Heart left ventricle (tissue), 16 donors: ENCODE measurements at regions of chr12 and their contacts with region 1.

Region 1: GRCh38 chr12:21697904-21698630 is 40.4 kb upstream of the LDHB start:
- DNase-seq: no peak
- ATAC-seq: peak in 2 of 4 donors; percentile 18 to 47
- H3K4me3 ChIP-seq: peak overlapping the region in 9 of 12 donors; percentile 9 to 41 (median 29)
- H3K27ac ChIP-seq: peak overlapping the region in 3 of 12 donors; percentile 6 to 28 (median 25)
- H3K4me1 ChIP-seq: peaks cover 0 to 4% (median 0%) of the 10 kb centered on the region in 12 donors
- H3K27me3 ChIP-seq: no peaks in the 10 kb centered on the region
- CTCF ChIP-seq: peak; percentile 64 to 86 (median 74)
- POLR2A ChIP-seq: no peak

Region 2: GRCh38 chr12:21989819-21990412 is 291.8 kb after region 1 on chr12:
- intact Hi-C with region 1: loop called in 8 of 10 experiments (anchors 2 to 5 kb)
- DNase-seq: no peak
- ATAC-seq: peak in 1 of 4 donors; percentile 36
- H3K4me3 ChIP-seq: no peak overlapping the region
- H3K27ac ChIP-seq: no peak overlapping the region
- H3K4me1 ChIP-seq: peaks cover 0 to 6% (median 0%) of the 10 kb centered on the region in 12 donors
- H3K27me3 ChIP-seq: no peaks in the 10 kb centered on the region
- CTCF ChIP-seq: peak; percentile 28 to 73 (median 58)
- POLR2A ChIP-seq: no peak

Region 3: DNA sequence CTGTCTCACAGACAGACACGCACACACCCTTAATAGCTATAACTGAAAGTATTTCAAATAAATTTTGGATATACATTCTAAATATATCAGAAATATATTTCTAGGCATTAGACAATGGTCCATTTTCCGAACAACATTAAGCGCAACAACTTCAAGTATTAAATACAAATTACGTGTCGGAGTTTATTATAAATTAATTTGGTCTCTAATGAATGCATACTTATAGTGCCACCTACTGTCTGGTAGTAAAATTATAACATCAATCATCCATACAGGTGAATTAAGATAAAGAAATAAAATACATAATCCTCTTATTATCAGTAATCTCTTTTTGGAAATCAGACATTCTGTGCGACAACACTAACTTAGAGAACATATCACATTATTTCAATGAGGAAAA is 320.8 kb after region 1 on chr12:
- intact Hi-C with region 1: loop called (anchors 2 to 5 kb)
- DNase-seq: no peak
- ATAC-seq: no peak
- H3K4me3 ChIP-seq: no peak overlapping the region
- H3K27ac ChIP-seq: no peak overlapping the region
- H3K4me1 ChIP-seq: peaks cover 0 to 11% (median 0%) of the 10 kb centered on the region in 12 donors
- H3K27me3 ChIP-seq: no peaks in the 10 kb centered on the region
- CTCF ChIP-seq: peak; percentile 26 to 75 (median 56)
- POLR2A ChIP-seq: no peak

Region 4: GRCh38 chr12:22459838-22460490 is 761.9 kb after region 1 on chr12:
- intact Hi-C with region 1: loop called in 2 of 10 experiments (anchors 5 to 10 kb)
- DNase-seq: no peak
- ATAC-seq: peak in 2 of 4 donors; percentile 42 to 77
- H3K4me3 ChIP-seq: no peak overlapping the region
- H3K27ac ChIP-seq: no peak overlapping the region
- H3K4me1 ChIP-seq: peaks cover 0 to 14% (median 0%) of the 10 kb centered on the region in 12 donors
- H3K27me3 ChIP-seq: no peaks in the 10 kb centered on the region
- CTCF ChIP-seq: peak in 11 of 12 donors; percentile 37 to 73 (median 57)
- POLR2A ChIP-seq: no peak